ENCODE measurements at regions of chr14 and their contacts with region 1.

Region 1: DNA sequence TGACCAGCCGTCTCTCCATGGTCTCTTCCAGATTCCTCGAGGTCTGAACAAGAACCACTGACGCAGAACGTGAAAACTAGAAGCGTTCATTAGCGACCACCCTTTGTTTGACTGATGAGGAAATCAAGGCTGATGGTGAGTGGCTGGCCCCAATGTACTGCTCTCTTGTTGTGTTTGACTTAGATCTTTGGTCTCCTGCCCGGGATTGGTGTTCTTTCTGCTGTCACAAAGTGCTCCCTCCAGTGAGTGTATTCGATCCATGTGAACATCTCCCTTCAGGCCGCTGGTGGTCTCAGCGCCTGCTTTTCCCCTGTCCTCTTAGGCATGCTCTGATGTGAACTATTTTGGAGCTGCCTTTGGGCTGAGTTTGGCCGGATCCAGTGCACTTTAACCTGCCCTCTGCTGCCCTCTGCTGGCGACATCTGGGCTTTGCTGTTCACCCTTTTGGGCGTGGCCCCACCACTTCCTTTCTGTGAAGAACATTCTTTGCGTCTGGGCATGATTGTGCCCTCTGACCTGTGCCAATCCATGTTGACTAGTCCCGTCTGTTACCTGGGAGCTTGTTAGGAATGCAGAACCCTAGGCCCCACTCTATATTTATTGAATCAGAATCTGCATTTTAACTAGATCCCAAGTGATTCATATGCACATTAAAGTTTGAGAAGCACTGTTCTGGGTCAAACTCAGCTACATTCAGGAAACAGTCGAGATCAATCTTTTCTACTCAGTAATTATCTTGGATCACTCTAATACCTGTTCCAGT is 279.2 kb downstream of the TTC6 start:
- DNase-seq: peak; percentile 50
- CTCF ChIP-seq: peak; percentile 87

Region 2: DNA sequence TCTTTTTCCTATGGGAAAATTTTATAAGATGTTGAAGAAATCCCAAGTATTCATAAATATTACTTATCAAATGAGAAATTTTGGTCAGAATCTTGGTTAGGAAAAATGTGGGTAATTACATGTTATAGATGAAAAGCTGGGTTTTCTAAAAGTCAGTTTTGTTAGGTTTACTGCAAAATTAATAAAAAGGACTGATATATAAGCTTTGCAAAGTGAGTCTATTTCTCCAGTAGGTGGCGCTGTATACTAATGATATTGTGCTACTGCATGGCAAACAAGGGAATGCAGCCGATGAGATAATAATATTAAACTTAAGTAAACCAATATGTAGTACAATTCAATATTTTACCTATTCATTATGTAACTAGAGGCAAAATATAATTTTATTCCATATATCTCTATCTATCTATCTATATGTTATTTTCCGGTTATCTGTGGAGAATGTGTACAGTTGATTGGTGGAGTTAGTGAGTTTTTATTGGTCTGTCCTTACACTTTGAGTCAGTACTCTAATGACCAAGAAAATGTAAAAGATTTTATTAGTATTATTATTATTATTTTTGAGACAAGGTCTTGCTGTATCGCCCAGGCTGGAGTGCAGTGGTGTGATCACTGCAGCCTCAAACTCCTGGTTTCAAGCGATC is 643.9 kb before region 1 on chr14:
- in situ Hi-C with region 1: loop called (anchors 25 kb)
- DNase-seq: peak; percentile 24
- CTCF ChIP-seq: peak; percentile 72

Region 3: DNA sequence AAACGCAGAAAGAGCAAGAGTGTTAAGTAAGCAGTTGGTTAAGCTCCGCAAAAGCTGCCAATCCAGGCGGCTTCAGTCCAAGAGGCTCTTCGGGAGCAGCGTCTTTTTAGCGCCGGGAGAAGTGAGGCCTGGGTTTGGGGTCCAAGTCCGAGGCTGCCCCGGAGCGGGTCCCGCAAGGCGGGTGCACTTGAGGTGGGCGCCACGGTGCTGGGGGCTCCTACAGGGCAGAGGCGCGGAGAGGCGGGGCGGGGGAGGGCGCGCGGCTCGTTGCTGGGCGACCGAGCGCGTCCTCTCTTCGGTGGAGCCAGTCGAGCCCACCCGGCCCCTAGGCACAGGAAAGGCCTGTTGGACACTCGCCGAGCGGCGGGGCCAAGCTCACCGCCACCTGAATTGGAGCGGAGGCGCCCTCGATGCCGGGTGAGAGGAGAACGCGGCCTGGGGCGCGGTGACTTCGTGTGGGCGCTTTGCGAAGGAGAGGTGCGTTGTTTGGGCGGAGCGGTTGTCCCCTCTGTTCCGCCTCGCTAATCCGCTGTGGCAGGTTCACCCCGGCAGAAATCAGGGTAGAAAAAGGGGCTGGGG is 263.6 kb before region 1 on chr14:
- in situ Hi-C with region 1: no loop called
- DNase-seq: no peak
- CTCF ChIP-seq: no peak

Region 4: GRCh38 chr14:37678916-37679315 is 195.7 kb before region 1 on chr14:
- in situ Hi-C with region 1: no loop called
- DNase-seq: no peak
- CTCF ChIP-seq: no peak

Region 5: GRCh38 chr14:37776791-37777499 is 97.7 kb before region 1 on chr14:
- in situ Hi-C with region 1: no loop called
- DNase-seq: no peak
- CTCF ChIP-seq: no peak

Region 6: DNA sequence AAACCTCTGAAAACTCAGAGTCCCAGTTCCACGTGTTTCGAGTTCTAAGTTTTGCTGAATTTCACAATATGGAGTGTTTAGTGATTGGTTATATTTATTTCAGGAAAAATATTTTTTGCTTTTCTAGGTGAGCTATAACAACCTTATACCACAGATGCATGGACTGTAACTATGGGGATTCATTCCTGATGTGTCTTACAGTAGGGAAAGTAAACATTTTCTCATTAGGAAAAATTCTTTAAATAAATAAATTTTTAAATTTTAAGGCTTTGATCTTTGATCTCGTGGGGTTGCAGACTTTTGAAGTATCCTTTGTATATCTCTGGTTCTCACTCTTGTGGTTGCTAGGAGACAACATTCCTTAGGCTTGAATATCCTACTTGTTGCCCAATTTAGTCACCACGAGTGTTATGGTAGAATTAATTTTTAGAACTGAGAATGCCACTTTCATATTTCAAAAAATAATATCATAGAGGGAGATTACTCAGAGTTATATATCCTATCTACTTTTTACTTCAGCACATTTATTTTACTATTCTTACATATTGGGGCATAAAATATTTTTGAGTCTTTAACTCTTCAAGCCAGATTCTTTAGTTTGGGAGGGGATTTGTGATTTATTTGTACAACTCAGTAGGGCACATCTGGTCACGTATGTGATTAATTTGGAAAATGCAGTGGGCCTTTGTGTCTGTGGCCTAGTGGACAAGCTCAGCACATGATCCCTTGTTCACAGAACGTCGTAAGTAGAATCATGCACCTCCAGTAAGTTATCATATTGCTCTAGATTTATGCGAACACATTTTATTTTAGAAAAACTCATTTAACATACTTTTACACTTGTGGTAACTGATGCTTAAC is 55.2 kb before region 1 on chr14:
- in situ Hi-C with region 1: no loop called
- DNase-seq: no peak
- CTCF ChIP-seq: no peak

Measured in GM13977 (cell line).